Heart right ventricle (tissue), 16 donors: ENCODE measurements at regions of chr7 and their contacts with region 1.

Region 1: DNA sequence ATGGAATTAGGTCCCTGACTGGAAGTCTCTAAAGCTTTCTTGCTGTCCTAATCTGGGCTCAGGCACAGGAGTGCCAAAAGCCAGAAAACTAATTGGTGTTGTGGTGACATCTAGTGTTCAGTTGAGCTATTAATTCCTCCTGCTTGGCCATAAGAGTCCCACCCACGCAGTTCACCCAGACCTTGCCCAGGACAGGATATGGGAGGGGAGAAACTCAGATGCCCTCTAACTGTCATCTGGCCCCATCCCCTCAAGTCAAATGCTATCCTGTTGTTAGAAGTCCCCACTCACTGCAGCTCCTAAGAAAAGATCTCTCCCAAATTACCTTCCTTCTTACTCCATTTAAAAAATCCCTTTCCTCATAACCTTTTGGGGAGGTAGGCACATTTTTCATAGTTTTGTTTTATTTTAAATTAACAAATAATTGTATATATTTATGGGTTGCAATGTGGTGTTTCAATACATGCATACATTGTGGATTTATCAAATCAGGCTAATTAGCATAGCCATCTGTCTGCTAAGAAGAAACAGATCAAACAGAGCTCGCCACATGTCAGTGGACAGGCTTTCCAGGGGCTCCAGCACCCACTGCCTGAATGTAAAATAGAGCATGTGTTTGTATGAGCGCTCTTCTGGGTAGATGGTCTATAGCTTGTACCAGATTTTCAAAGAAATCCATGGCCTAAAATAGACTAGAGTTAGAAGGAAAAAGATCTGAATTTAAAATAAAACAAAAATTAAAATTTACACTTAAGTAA is 84.0 kb downstream of the GSAP start:
- DNase-seq: peak; percentile 27 to 85
- ATAC-seq: peak; percentile 89 to 96 (median 92)
- H3K4me3 ChIP-seq: no peak overlapping the region
- H3K27ac ChIP-seq: peak overlapping the region in 2 of 10 donors; percentile 2 to 3
- H3K4me1 ChIP-seq: peaks cover 11 to 68% (median 49%) of the 10 kb centered on the region in 9 donors
- H3K27me3 ChIP-seq: no peaks in the 10 kb centered on the region
- CTCF ChIP-seq: peak; percentile 54 to 85 (median 73)

Region 2: DNA sequence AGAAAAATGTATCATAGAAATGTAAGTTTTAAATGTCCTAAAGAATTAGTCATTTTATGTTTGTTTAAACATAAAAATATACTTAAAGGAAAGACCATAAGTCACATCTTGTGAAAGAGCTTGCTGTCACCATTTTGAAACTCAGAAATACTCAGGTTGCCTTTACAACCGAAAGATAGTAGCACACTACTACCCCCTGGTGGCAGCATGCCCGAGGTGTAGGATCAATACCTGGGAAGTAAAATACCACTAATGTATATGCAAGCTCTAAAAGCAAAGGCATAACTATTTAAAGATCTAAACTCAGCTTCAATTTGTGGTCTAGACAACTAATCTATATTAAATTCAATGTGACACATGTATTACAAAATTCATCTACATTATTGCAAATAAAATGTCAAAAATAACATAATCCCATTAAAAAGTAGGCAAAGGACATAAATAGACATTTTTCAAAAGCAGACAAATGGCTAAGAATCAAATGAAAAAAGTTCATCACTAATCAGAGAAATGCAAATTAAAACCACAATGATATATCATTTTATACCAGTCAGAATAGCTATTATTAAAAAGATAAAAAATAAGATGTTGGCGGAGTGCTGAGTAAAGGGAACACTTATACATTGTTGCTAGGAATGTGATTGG is 84.8 kb before region 1 on chr7:
- intact Hi-C with region 1: loop called in 6 of 10 experiments (anchors 5 to 10 kb)
- DNase-seq: peak; percentile 61 to 74
- ATAC-seq: peak in 4 of 8 donors; percentile 47 to 66 (median 60)
- H3K4me3 ChIP-seq: no peak overlapping the region
- H3K27ac ChIP-seq: no peak overlapping the region
- H3K4me1 ChIP-seq: peaks cover 0 to 37% (median 15%) of the 10 kb centered on the region in 9 donors
- H3K27me3 ChIP-seq: no peaks in the 10 kb centered on the region
- CTCF ChIP-seq: peak; percentile 50 to 93 (median 80)

Region 3: GRCh38 chr7:77258014-77258413 is 74.1 kb before region 1 on chr7:
- intact Hi-C with region 1: loop called in 2 of 10 experiments (anchors 5 kb)
- DNase-seq: no peak
- ATAC-seq: peak in 1 of 8 donors; percentile 51
- H3K4me3 ChIP-seq: no peak overlapping the region
- H3K27ac ChIP-seq: no peak overlapping the region
- H3K4me1 ChIP-seq: peaks cover 0 to 10% (median 0%) of the 10 kb centered on the region in 9 donors
- H3K27me3 ChIP-seq: no peaks in the 10 kb centered on the region
- CTCF ChIP-seq: no peak

Region 4: DNA sequence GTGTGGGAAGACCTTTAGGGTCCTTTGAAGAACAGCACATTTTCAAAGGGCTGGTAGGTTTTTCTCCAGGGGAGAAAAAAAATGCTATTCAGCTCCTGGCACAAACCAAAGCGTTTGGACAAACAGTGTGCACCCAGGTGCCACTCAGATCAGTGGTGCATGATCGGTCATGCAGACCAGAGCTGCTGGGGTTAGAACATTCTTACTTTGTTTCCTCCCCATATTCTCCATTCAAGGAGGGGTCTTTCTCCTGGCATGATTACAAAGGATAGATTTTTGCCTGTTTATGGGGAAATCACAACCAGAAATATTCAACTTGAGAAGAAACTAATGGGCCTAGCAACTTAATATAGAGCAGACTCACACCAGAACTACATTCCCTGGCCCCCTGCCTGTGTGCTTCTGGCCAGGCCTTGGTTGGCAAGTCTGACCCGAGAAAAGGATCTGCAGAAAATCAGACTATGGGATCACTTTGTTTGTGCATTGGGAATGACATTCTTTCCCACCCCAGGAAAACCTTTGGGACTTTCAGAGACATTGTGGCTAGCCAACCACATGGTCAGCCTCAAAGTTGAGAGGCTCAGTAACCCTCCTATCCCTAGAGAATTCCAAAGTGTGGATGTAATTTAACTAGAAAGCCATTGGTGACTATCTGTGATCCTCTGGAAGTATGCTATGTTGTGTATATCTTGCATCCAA is 50.2 kb before region 1 on chr7:
- intact Hi-C with region 1: no loop called
- DNase-seq: peak; percentile 16 to 32
- ATAC-seq: peak; percentile 59 to 87 (median 68)
- H3K4me3 ChIP-seq: no peak overlapping the region
- H3K27ac ChIP-seq: peak overlapping the region in 6 of 10 donors; percentile 6 to 52 (median 25)
- H3K4me1 ChIP-seq: peaks cover 2 to 25% (median 15%) of the 10 kb centered on the region in 9 donors
- H3K27me3 ChIP-seq: no peaks in the 10 kb centered on the region
- CTCF ChIP-seq: no peak

Region 5: DNA sequence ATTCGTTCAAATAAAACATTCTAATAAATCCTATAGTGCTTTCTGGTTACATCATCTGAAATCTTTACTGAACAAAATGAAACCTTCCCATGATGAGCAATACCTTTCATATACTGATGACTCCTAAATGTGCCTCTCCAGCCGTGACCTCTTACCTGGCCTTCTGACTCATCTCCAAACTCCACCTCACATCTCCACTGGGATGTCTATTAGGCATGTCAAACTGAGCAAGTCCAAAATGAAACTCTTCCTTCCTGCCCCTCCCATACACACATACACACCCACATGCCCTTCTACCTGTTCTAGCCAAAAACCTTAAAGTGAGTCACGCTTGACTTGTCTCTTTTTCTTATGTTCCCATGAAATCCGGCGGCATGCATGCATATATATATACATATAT is 61.2 kb after region 1 on chr7:
- intact Hi-C with region 1: no loop called
- DNase-seq: no peak
- ATAC-seq: no peak
- H3K4me3 ChIP-seq: no peak overlapping the region
- H3K27ac ChIP-seq: no peak overlapping the region
- H3K4me1 ChIP-seq: peaks cover 0 to 6% (median 2%) of the 10 kb centered on the region in 9 donors
- H3K27me3 ChIP-seq: no peaks in the 10 kb centered on the region
- CTCF ChIP-seq: no peak